Activated CD8-positive, alpha-beta T cell treated with anti-CD3 and anti-CD28 coated beads for 36 hours (primary cell): ENCODE measurements at regions of chr12 and their contacts with region 1.

Region 1: DNA sequence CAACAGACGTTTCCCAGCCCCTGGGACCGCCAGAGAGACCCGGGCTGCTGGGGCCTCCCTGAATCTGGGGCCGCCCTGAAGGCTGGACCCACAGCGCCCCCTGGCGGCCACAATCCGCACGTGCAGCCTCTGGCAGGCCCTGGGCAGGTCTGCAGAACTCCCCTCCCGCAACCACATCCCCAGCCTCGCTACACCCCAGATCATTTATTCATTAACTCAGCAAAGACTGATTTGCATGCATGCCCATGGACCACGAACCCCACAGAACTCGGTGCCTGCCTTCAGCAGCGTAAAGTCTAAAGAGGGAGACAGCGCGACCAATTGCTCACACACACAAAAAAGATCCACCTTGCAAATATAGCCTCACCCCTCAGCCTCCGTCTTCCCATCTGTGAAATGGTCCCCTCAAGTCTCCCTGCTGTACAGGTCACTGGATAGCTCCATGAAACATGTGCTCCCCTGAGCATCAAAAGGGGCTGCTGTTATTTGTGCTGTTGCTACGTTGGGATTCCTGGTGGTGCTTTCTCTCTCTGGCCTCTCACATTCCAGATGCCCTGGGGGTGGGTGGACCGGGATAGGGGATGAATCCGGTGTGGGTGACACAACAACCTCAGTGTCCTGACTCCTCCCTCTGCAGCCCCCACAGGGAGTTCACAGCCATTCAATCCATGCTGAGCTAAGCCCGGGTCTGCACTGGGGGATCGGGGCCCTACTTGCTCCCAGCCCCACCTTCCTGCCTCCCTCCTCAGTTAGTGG is 96.4 kb downstream of the SCARB1 start:
- DNase-seq: peak; percentile 88
- ATAC-seq: peak; percentile 79
- H3K4me3 Mint-ChIP-seq: no peak overlapping the region
- H3K27ac Mint-ChIP-seq: no peak overlapping the region
- H3K4me1 Mint-ChIP-seq: peaks cover 27% of the 10 kb centered on the region
- H3K27me3 Mint-ChIP-seq: peaks cover 13% of the 10 kb centered on the region
- CTCF ChIP-seq: peak; percentile 100

Region 2: GRCh38 chr12:124347716-124348357 is 419.4 kb before region 1 on chr12:
- CTCF ChIA-PET with region 1: interaction called, 8 read pairs
- POLR2A ChIA-PET with region 1: no interaction called
- intact Hi-C with region 1: loop called (anchors 10 kb)
- DNase-seq: peak; percentile 38
- ATAC-seq: no peak
- H3K4me3 Mint-ChIP-seq: no peak overlapping the region
- H3K27ac Mint-ChIP-seq: no peak overlapping the region
- H3K4me1 Mint-ChIP-seq: no peaks in the 10 kb centered on the region
- H3K27me3 Mint-ChIP-seq: no peaks in the 10 kb centered on the region
- CTCF ChIP-seq: peak; percentile 65

Region 3: GRCh38 chr12:124512667-124513296 is 254.5 kb before region 1 on chr12:
- CTCF ChIA-PET with region 1: no interaction called
- POLR2A ChIA-PET with region 1: no interaction called
- intact Hi-C with region 1: no loop called
- DNase-seq: no peak
- ATAC-seq: no peak
- H3K4me3 Mint-ChIP-seq: no peak overlapping the region
- H3K27ac Mint-ChIP-seq: no peak overlapping the region
- H3K4me1 Mint-ChIP-seq: peaks cover 22% of the 10 kb centered on the region
- H3K27me3 Mint-ChIP-seq: no peaks in the 10 kb centered on the region
- CTCF ChIP-seq: no peak

Region 4: GRCh38 chr12:124551268-124552144 is 215.7 kb before region 1 on chr12:
- CTCF ChIA-PET with region 1: interaction called, 11 read pairs
- POLR2A ChIA-PET with region 1: interaction called, 3 read pairs
- intact Hi-C with region 1: loop called (anchors 10 kb)
- DNase-seq: peak; percentile 20
- ATAC-seq: no peak
- H3K4me3 Mint-ChIP-seq: no peak overlapping the region
- H3K27ac Mint-ChIP-seq: no peak overlapping the region
- H3K4me1 Mint-ChIP-seq: peaks cover 78% of the 10 kb centered on the region
- H3K27me3 Mint-ChIP-seq: no peaks in the 10 kb centered on the region
- CTCF ChIP-seq: no peak

Region 5: DNA sequence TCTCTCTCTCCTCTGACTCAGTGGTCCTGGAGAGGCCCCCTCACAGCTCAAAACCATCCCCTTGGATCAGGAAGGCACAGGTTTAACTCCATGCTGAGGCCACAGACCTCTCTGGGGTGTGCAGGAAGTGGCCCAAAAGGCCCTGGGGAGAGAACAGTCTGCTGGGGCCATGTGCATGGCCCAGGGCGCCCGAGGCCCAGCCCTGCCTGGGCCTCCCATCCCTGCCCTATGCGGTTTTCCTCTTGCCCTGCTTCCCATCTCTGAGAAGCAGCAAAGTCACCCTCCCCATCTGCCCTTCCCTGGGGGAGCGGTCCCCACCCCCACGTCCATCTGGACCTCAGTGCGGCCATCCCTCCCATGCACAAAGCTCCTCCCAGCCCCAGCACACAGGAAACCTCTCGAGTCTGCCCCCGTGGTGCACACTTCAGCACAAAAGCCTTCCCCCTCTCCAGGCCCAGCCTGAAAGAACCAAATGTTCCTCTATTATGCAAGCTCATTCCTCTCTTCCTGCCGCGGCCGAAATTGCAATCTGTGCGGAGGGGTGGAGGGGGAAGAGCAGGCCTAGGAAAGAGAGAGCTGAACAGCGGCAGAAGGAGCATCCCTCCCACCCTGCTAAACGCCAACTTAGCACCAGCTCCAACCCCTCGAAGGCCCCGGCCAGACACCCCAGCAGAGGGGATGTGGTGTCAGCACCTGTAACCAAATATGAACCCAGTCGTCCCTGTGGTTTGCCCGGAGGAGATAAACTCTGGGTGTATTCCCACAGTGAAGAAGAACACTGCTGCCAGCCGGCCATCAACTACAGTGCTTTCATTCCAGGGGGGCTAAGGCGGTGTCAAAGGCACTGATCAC is 12.1 kb before region 1 on chr12:
- CTCF ChIA-PET with region 1: interaction called, 29 read pairs
- POLR2A ChIA-PET with region 1: no interaction called
- intact Hi-C with region 1: no loop called
- DNase-seq: peak; percentile 31
- ATAC-seq: peak; percentile 70
- H3K4me3 Mint-ChIP-seq: no peak overlapping the region
- H3K27ac Mint-ChIP-seq: peak overlapping the region; percentile 10
- H3K4me1 Mint-ChIP-seq: peaks cover 17% of the 10 kb centered on the region
- H3K27me3 Mint-ChIP-seq: peaks cover 9% of the 10 kb centered on the region
- CTCF ChIP-seq: no peak

Region 6: GRCh38 chr12:125006206-125006764 is 239.0 kb after region 1 on chr12:
- CTCF ChIA-PET with region 1: no interaction called
- POLR2A ChIA-PET with region 1: no interaction called
- intact Hi-C with region 1: no loop called
- DNase-seq: no peak
- ATAC-seq: no peak
- H3K4me3 Mint-ChIP-seq: no peak overlapping the region
- H3K27ac Mint-ChIP-seq: no peak overlapping the region
- H3K4me1 Mint-ChIP-seq: no peaks in the 10 kb centered on the region
- H3K27me3 Mint-ChIP-seq: no peaks in the 10 kb centered on the region
- CTCF ChIP-seq: no peak